ENCODE measurements at regions of chrX and their contacts with region 1.

Region 1: GRCh38 chrX:43557792-43558191 is 98.3 kb upstream of the MAOA start:
- DNase-seq: peak; percentile 53
- ATAC-seq: peak; percentile 60

Region 2: GRCh38 chrX:41796577-41796976 is 1761.2 kb before region 1 on chrX:
- intact Hi-C with region 1: loop called (anchors 5 kb)
- DNase-seq: no peak
- ATAC-seq: no peak

Region 3: GRCh38 chrX:43654431-43655150 is 96.8 kb after region 1 on chrX:
- intact Hi-C with region 1: loop called (anchors 10 kb)
- DNase-seq: peak; percentile 96
- ATAC-seq: peak; percentile 95

Region 4: GRCh38 chrX:43750248-43750676 is 192.5 kb after region 1 on chrX:
- intact Hi-C with region 1: loop called (anchors 2 kb)
- DNase-seq: no peak
- ATAC-seq: peak; percentile 92

Region 5: GRCh38 chrX:43939187-43939926 is 381.6 kb after region 1 on chrX:
- intact Hi-C with region 1: loop called (anchors 10 kb)
- DNase-seq: no peak
- ATAC-seq: peak; percentile 60

Measured in Right ventricle myocardium superior (tissue), 1 donor.